ENCODE measurements at regions of chr18 and their contacts with region 1.

Region 1: GRCh38 chr18:23918401-23919032 is 96.0 kb upstream of the TTC39C start:
- DNase-seq: peak; percentile 66 to 88 (median 83)
- ATAC-seq: peak; percentile 87
- H3K4me3 ChIP-seq: no peak overlapping the region
- H3K4me3 Mint-ChIP-seq: no peak overlapping the region
- H3K27ac ChIP-seq: no peak overlapping the region
- H3K27ac Mint-ChIP-seq: no peak overlapping the region
- H3K4me1 ChIP-seq: no peaks in the 10 kb centered on the region
- H3K4me1 Mint-ChIP-seq: peaks cover 9% of the 10 kb centered on the region
- H3K27me3 ChIP-seq: no peaks in the 10 kb centered on the region
- H3K27me3 Mint-ChIP-seq: no peaks in the 10 kb centered on the region
- CTCF ChIP-seq: peak; percentile 97

Region 2: DNA sequence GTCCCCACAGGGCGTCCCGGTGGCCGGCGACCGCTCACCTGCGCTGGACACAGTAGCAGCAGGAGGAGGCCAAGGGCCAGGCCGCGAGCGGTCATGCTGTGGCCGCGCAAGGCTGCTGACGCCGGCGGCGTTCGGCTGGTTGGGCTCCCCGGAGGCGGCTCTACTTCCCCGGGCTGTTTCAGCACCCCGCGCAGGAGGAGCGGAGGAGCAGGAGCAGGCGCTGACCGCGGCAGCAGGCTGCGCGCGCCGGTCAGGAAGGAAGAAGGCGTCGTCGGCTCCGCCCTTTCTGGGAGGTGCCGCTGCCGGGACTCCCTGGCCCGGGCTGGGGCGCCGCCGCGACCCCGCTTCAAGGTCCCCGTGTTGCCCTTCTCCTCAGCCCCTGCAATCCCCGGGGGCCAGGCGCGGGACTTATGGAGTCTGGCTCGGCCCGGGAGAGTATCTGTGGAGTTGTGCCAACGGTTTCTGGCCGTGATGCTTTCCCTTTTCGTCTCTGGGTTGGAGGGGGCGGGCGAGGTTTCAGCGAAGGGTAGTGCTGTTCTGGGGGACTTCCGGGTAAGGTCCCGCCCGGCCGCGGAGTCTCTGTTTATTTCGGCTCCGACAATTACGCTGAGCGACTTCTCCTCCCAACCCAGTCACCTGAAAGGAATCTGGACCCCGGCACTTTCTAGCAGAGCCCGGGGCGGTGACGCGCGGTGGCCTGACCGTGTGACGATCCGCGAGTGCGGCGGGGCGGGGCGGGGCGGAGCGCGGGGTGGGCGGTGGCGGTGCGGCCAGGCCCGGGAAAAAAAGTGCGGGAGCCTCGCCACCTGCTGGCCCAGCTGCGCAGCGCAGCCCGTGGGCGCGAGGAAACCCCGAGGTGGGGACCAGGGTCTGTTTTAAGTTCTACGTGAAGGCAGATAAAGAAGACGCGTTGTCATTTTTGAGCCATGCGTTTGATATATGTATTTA is 332.0 kb before region 1 on chr18 and contains the start of gene NPC1:
- CTCF ChIA-PET with region 1: no interaction called
- POLR2A ChIA-PET with region 1: no interaction called
- intact Hi-C with region 1: no loop called
- DNase-seq: peak; percentile 84 to 96 (median 91)
- ATAC-seq: peak; percentile 88
- H3K4me3 ChIP-seq: peak within 1 kb of the TSS; percentile 99 to 100
- H3K4me3 Mint-ChIP-seq: peak within 1 kb of the TSS; percentile 95
- H3K27ac ChIP-seq: peak within 1 kb of the TSS; percentile 99 to 100
- H3K27ac Mint-ChIP-seq: peak within 1 kb of the TSS; percentile 97
- H3K4me1 ChIP-seq: peaks cover 24% of the 10 kb centered on the region
- H3K4me1 Mint-ChIP-seq: peaks cover 41% of the 10 kb centered on the region
- H3K27me3 ChIP-seq: no peaks in the 10 kb centered on the region
- H3K27me3 Mint-ChIP-seq: no peaks in the 10 kb centered on the region
- CTCF ChIP-seq: peak; percentile 99
- total RNA-seq, gene NPC1: 37.3 to 38.9 TPM

Region 3: GRCh38 chr18:23619388-23619881 is 299.1 kb before region 1 on chr18:
- CTCF ChIA-PET with region 1: interaction called, 41 read pairs
- POLR2A ChIA-PET with region 1: no interaction called
- intact Hi-C with region 1: loop called (anchors 1 kb)
- DNase-seq: peak in 2 of 9 experiments; percentile 27 to 47
- ATAC-seq: peak; percentile 36
- H3K4me3 ChIP-seq: peak overlapping the region; percentile 19 to 26
- H3K4me3 Mint-ChIP-seq: peak overlapping the region; percentile 72
- H3K27ac ChIP-seq: no peak overlapping the region
- H3K27ac Mint-ChIP-seq: no peak overlapping the region
- H3K4me1 ChIP-seq: no peaks in the 10 kb centered on the region
- H3K4me1 Mint-ChIP-seq: peaks cover 11% of the 10 kb centered on the region
- H3K27me3 ChIP-seq: peaks cover 11 to 15% of the 10 kb centered on the region in 2 experiments
- H3K27me3 Mint-ChIP-seq: peaks cover 39% of the 10 kb centered on the region
- CTCF ChIP-seq: no peak

Region 4: GRCh38 chr18:23828426-23828825 is 90.1 kb before region 1 on chr18:
- CTCF ChIA-PET with region 1: interaction called, 11 read pairs
- POLR2A ChIA-PET with region 1: no interaction called
- intact Hi-C with region 1: loop called (anchors 1 kb)
- DNase-seq: peak in 8 of 9 experiments; percentile 25 to 91 (median 52)
- ATAC-seq: peak; percentile 98
- H3K4me3 ChIP-seq: no peak overlapping the region
- H3K4me3 Mint-ChIP-seq: no peak overlapping the region
- H3K27ac ChIP-seq: peak overlapping the region; percentile 32 to 73
- H3K27ac Mint-ChIP-seq: peak overlapping the region; percentile 56
- H3K4me1 ChIP-seq: peaks cover 12% of the 10 kb centered on the region
- H3K4me1 Mint-ChIP-seq: peaks cover 17% of the 10 kb centered on the region
- H3K27me3 ChIP-seq: no peaks in the 10 kb centered on the region
- H3K27me3 Mint-ChIP-seq: peaks cover under 1% of the 10 kb centered on the region
- CTCF ChIP-seq: no peak

Region 5: GRCh38 chr18:23871410-23871809 is 47.1 kb before region 1 on chr18:
- CTCF ChIA-PET with region 1: interaction called, 10 read pairs
- POLR2A ChIA-PET with region 1: interaction called, 4 read pairs
- intact Hi-C with region 1: loop called in 1 of 2 experiments (anchors 2 kb)
- DNase-seq: peak; percentile 57 to 93 (median 81)
- ATAC-seq: peak; percentile 93
- H3K4me3 ChIP-seq: no peak overlapping the region
- H3K4me3 Mint-ChIP-seq: peak overlapping the region; percentile 71
- H3K27ac ChIP-seq: peak overlapping the region; percentile 5 to 67
- H3K27ac Mint-ChIP-seq: peak overlapping the region; percentile 98
- H3K4me1 ChIP-seq: peaks cover 48% of the 10 kb centered on the region
- H3K4me1 Mint-ChIP-seq: peaks cover 55% of the 10 kb centered on the region
- H3K27me3 ChIP-seq: no peaks in the 10 kb centered on the region
- H3K27me3 Mint-ChIP-seq: no peaks in the 10 kb centered on the region
- CTCF ChIP-seq: no peak

Region 6: GRCh38 chr18:23949863-23950262 is 31.3 kb after region 1 on chr18:
- CTCF ChIA-PET with region 1: interaction called, 10 read pairs
- POLR2A ChIA-PET with region 1: no interaction called
- intact Hi-C with region 1: no loop called
- DNase-seq: no peak
- ATAC-seq: no peak
- H3K4me3 ChIP-seq: no peak overlapping the region
- H3K4me3 Mint-ChIP-seq: no peak overlapping the region
- H3K27ac ChIP-seq: no peak overlapping the region
- H3K27ac Mint-ChIP-seq: no peak overlapping the region
- H3K4me1 ChIP-seq: no peaks in the 10 kb centered on the region
- H3K4me1 Mint-ChIP-seq: peaks cover 8% of the 10 kb centered on the region
- H3K27me3 ChIP-seq: no peaks in the 10 kb centered on the region
- H3K27me3 Mint-ChIP-seq: no peaks in the 10 kb centered on the region
- CTCF ChIP-seq: no peak

Region 7: DNA sequence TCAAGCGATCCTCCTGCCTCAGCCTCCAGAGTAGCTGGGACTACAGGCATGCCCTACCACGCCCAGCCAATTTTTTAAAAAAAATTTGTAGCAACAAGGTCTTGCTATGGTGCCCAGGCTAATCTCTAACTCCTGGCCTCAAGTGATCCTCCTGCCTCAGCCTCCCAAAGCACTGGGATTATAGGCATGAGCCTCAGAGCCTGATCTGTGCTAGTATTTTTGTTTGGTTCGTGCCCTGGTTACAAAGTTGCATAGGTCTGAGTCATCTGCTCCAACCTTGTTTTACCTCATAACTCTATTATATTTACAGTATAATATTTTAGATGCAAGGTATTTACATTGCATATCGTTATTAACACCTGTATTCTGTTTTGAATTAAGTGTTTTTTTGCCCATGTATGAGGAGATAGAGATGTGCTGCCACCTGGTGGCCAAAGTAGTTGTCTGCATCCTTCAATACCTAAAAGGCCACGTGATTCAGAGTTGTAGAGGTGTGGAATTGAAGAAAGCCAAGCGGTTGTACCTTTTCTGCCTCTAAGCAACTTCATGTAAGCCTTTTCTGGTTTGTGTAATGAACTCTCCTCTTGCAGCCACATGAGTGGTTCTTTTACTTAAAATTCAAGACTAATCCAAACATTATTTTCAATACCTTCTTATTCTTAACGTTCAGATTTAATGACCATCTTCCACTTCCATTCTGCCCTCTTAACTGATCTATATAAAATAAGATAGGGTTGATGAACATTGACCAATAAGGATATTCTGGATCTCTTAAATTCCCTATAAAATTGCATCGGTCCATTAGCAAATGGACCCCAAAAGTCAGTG is 200.4 kb after region 1 on chr18:
- CTCF ChIA-PET with region 1: interaction called, 20 read pairs
- POLR2A ChIA-PET with region 1: no interaction called
- intact Hi-C with region 1: loop called (anchors 1 to 2 kb)
- DNase-seq: peak; percentile 55 to 89 (median 79)
- ATAC-seq: peak; percentile 90
- H3K4me3 ChIP-seq: no peak overlapping the region
- H3K4me3 Mint-ChIP-seq: no peak overlapping the region
- H3K27ac ChIP-seq: no peak overlapping the region
- H3K27ac Mint-ChIP-seq: no peak overlapping the region
- H3K4me1 ChIP-seq: peaks cover 10% of the 10 kb centered on the region
- H3K4me1 Mint-ChIP-seq: peaks cover 23% of the 10 kb centered on the region
- H3K27me3 ChIP-seq: no peaks in the 10 kb centered on the region
- H3K27me3 Mint-ChIP-seq: no peaks in the 10 kb centered on the region
- CTCF ChIP-seq: peak; percentile 77